HepG2 (cell line): ENCODE measurements at regions of chr7 and their contacts with region 1.

Region 1: DNA sequence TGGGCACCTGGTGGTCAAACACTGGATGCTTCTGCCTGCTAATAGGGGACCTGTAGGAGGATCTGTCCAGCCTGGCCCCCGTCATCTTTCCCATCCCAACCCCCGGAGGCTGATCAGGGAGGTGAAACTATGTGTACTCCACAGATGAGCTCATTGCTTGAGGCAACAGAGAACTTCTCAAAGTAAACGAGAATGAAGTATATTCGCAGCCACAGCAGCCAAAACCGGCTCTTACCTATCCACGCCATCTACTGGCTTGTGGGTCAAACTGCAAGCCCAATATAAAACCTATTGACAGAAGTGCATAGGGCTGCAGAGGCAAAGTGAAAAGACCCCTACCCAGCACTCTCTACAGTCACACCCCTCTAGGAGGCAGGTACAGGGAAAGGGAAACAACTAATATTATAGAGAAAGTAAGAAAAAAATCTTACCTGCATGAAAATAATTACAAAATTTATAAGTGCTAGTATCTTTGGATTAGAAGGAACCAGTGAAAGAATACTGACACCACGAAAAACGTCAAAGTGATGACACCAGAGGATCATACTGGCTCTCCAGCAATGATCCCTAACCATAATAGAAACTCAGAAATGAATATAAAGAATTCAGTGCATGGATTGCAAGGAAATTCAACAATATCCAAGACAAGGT is 973.5 kb downstream of the ANKRD7 start:
- DNase-seq: peak; percentile 41
- ATAC-seq: peak; percentile 93
- H3K4me3 ChIP-seq: no peak overlapping the region
- H3K27ac ChIP-seq: no peak overlapping the region
- H3K4me1 ChIP-seq: no peaks in the 10 kb centered on the region
- H3K27me3 ChIP-seq: no peaks in the 10 kb centered on the region
- CTCF ChIP-seq: peak; percentile 68
- EP300 ChIP-seq: no peak
- POLR2A ChIP-seq: no peak
- RAD21 ChIP-seq: no peak

Region 2: GRCh38 chr7:118352854-118353453 is 845.0 kb before region 1 on chr7:
- CTCF ChIA-PET with region 1: interaction called, 8 read pairs
- POLR2A ChIA-PET with region 1: no interaction called
- in situ Hi-C with region 1: loop called (anchors 25 kb)
- intact Hi-C with region 1: loop called (anchors 5 kb)
- DNase-seq: peak; percentile 31
- ATAC-seq: peak; percentile 43; the same call in 1 of the 3 replicates
- H3K4me3 ChIP-seq: no peak overlapping the region
- H3K27ac ChIP-seq: no peak overlapping the region
- H3K4me1 ChIP-seq: no peaks in the 10 kb centered on the region
- H3K27me3 ChIP-seq: no peaks in the 10 kb centered on the region
- CTCF ChIP-seq: peak; percentile 57
- EP300 ChIP-seq: no peak
- POLR2A ChIP-seq: no peak
- RAD21 ChIP-seq: no peak

Region 3: DNA sequence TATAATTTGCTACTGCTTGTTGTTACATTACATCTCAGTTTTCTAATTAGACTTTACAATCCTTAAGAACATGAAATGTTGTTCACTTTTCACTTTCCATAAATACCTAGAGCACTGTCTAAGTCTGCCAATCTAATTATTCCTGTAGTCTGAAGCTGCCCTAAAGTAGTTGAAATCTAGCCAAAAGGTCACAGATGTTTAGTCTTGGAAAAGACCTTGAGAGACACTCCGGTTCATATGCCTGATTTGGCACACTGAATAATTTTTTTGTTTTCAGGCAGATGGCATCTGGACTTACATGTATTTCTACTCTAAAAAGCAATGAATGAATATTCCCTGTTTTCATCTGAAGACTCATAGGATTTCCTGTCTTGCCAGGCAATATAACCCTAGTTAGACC is 614.4 kb before region 1 on chr7:
- CTCF ChIA-PET with region 1: no interaction called
- POLR2A ChIA-PET with region 1: no interaction called
- in situ Hi-C with region 1: no loop called
- intact Hi-C with region 1: no loop called
- DNase-seq: no peak
- ATAC-seq: no peak
- H3K4me3 ChIP-seq: no peak overlapping the region
- H3K27ac ChIP-seq: no peak overlapping the region
- H3K4me1 ChIP-seq: no peaks in the 10 kb centered on the region
- H3K27me3 ChIP-seq: no peaks in the 10 kb centered on the region
- CTCF ChIP-seq: no peak
- EP300 ChIP-seq: no peak
- POLR2A ChIP-seq: no peak
- RAD21 ChIP-seq: no peak

Region 4: GRCh38 chr7:118918556-118918955 is 279.4 kb before region 1 on chr7:
- CTCF ChIA-PET with region 1: interaction called, 5 read pairs
- POLR2A ChIA-PET with region 1: no interaction called
- in situ Hi-C with region 1: no loop called
- intact Hi-C with region 1: loop called (anchors 5 kb)
- DNase-seq: peak; percentile 15
- ATAC-seq: no peak
- H3K4me3 ChIP-seq: no peak overlapping the region
- H3K27ac ChIP-seq: no peak overlapping the region
- H3K4me1 ChIP-seq: no peaks in the 10 kb centered on the region
- H3K27me3 ChIP-seq: no peaks in the 10 kb centered on the region
- CTCF ChIP-seq: 0 out of 2 replicates have a peak, but pooled peaks have one; percentile 24
- EP300 ChIP-seq: no peak
- POLR2A ChIP-seq: no peak
- RAD21 ChIP-seq: no peak